ENCODE measurements at regions of chr2 and their contacts with region 1.

Region 1: DNA sequence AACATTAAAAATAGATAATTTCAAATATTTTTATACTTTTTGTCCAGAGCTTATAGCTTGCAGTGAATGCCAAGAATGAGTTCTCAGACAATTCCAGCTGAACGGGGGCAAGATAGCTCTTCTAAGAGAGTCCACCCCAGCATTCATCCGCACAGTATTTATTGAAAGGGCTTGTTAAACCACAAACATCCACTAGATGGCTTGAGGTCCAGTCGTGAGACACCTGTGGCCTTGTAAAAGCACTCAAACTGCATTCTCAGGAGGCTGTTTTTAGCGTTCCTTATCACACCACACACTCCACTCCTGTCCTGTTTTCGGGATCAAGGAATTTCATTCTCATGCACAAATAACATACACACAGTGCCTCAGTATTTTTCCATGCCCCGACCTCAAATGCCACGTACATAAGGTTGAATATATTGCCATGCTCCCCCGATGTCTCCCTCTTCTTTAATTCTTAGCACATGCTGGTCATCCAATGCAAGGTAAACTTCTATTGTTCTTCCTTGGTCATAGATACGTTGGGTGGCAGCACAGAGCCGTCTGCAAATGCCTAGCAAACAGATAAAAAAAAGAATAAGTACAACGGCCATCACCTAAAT is 47.4 kb downstream of the DNAJC10 start:
- DNase-seq: no peak
- ATAC-seq: no peak
- H3K4me3 ChIP-seq: no peak overlapping the region
- H3K4me3 Mint-ChIP-seq: no peak overlapping the region
- H3K27ac ChIP-seq: no peak overlapping the region
- H3K27ac Mint-ChIP-seq: no peak overlapping the region
- H3K4me1 ChIP-seq: no peaks in the 10 kb centered on the region
- H3K4me1 Mint-ChIP-seq: peaks cover 0 to 8% (median 0%) of the 10 kb centered on the region in 7 donors
- H3K27me3 ChIP-seq: no peaks in the 10 kb centered on the region
- H3K27me3 Mint-ChIP-seq: no peaks in the 10 kb centered on the region

Region 2: GRCh38 chr2:182355815-182356214 is 407.6 kb before region 1 on chr2:
- CTCF ChIA-PET with region 1: no interaction called
- POLR2A ChIA-PET with region 1: no interaction called
- intact Hi-C with region 1: no loop called
- DNase-seq: no peak
- ATAC-seq: no peak
- H3K4me3 ChIP-seq: no peak overlapping the region
- H3K4me3 Mint-ChIP-seq: no peak overlapping the region
- H3K27ac ChIP-seq: no peak overlapping the region
- H3K27ac Mint-ChIP-seq: no peak overlapping the region
- H3K4me1 ChIP-seq: no peaks in the 10 kb centered on the region
- H3K4me1 Mint-ChIP-seq: no peaks in the 10 kb centered on the region
- H3K27me3 ChIP-seq: no peaks in the 10 kb centered on the region
- H3K27me3 Mint-ChIP-seq: no peaks in the 10 kb centered on the region

Region 3: DNA sequence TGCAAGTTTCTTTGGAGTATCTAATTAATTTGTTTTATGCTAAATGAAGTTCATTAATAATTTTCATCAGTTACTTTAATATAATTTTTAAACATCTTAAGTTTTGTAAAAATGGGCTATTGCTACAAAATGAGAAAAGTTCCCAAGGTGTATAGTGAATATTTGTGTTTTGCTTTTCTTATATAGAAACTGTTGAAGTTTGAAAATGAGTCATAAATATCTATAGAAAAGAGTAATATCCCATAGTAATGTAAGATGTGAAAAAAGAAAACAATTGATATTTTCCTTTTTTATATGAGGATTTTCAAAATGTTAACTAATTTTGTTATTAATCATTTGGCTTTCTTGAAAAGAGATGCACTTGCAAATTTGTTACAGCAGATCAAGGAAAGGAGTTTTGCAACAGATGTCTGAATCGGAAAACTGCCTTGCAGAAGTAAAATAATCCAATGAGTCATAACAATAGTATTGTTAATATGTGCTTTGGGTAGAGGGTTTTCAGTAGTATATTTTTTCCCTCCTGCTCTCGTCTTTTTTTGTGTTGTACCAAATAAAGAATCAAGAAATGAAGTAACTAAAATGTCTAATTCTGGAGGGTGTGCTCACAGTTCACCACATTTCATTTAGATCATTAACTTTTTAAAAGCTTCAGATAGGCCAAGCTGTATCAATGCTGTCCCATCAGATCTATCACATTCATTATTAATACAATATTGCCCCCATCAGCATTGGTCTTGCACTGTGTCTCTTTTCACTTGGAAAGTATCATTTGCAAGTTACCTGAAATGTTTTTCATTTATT is 330.6 kb after region 1 on chr2:
- CTCF ChIA-PET with region 1: no interaction called
- POLR2A ChIA-PET with region 1: no interaction called
- intact Hi-C with region 1: loop called in 1 of 2 experiments (anchors 2 kb)
- DNase-seq: peak in 1 of 9 donors; percentile 15
- ATAC-seq: no peak
- H3K4me3 ChIP-seq: no peak overlapping the region
- H3K4me3 Mint-ChIP-seq: no peak overlapping the region
- H3K27ac ChIP-seq: no peak overlapping the region
- H3K27ac Mint-ChIP-seq: no peak overlapping the region
- H3K4me1 ChIP-seq: no peaks in the 10 kb centered on the region
- H3K4me1 Mint-ChIP-seq: no peaks in the 10 kb centered on the region
- H3K27me3 ChIP-seq: no peaks in the 10 kb centered on the region
- H3K27me3 Mint-ChIP-seq: no peaks in the 10 kb centered on the region